Dendritic cell treated with granulocyte-macrophage colony-stimulating factor and Interleukin-4, amounts not matched to agents 40 ng/mL and 50 ng/mL, for 4 days (primary cell): ENCODE measurements at regions of chr5 and their contacts with region 1.

Region 1: DNA sequence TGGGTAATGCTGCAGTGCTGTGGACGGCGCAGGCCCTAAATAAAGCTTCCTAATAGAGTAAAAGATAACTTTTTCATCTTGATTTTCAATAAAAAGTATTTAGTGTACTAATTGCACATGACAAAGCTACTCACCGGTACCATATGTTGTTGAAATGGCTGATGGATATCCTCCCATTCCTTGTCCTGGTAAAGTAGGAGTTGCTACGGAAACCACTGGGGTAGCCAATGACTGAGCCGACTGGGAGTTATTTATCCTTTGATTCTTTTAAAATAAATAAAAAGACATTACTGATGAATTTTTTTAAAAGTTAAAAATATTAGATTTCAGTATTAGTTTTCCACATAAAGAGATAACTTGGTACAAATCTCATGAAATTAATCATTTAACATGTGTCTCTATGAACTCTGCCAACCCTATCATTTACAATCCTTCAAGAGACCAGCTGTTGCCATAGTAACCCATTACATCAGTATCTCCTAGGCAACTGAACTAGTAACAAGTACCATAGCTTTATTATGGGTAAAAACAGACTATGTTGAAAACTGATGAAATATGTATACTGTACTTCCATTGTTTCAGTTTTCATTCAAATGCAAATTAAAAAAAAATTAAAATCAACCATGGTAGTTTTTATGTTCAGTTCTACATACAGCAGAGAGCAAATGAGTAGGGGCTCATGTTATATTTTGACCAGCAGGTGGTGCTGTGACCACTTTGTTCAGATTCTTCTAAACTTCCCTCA is 153.7 kb downstream of the MEF2C start:
- H3K4me3 Mint-ChIP-seq: no peak overlapping the region
- H3K27ac Mint-ChIP-seq: no peak overlapping the region
- H3K4me1 Mint-ChIP-seq: peaks cover 28% of the 10 kb centered on the region
- H3K27me3 Mint-ChIP-seq: no peaks in the 10 kb centered on the region

Region 2: DNA sequence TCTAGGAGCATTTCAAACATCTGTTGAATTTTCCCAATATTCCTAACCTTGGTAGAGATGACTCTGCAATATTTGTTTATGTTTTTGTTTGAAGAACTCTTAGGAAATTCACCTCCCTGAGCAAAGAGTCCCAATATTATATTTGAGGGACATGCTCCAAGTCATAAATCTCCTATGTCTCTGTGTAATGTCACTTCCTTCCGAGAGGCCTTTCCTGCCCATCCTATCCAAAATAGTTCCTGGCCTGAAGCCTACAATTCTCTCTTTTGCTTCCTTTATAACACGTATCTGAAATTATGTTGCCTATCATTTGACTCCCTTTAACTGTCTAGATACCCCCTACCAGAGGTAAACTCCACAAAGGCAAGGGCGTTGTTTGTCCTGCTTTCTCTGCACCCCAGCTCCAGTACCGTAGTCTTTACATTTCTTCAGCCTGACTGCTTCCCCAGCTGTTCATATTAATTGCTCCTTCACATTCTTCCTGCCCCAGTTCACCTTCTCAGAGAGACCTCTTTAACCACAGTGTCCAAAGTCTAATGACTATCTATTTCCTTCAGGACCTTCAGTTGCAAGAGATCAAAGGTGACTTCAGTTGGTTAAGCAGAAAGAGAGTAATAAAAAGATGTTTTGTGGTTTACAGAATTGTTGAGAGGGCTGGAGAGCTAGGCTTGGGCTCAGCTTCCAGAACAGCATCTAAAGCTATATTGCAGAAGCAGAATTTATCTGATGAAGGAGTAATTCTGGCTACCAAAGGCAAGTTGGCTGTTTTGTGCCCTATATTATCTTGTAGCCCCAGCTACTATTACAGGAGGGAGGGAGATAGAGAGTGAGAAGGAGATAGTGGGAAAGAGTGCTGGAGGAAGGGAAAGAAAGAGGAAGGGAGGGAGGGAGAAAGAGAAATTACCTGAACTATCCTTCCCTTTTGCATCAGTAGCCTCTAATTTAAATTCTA is 351.3 kb before region 1 on chr5:
- intact Hi-C with region 1: no loop called
- H3K4me3 Mint-ChIP-seq: no peak overlapping the region
- H3K27ac Mint-ChIP-seq: no peak overlapping the region
- H3K4me1 Mint-ChIP-seq: no peaks in the 10 kb centered on the region
- H3K27me3 Mint-ChIP-seq: no peaks in the 10 kb centered on the region

Region 3: GRCh38 chr5:88524941-88525340 is 204.3 kb before region 1 on chr5:
- intact Hi-C with region 1: no loop called
- H3K4me3 Mint-ChIP-seq: no peak overlapping the region
- H3K27ac Mint-ChIP-seq: no peak overlapping the region
- H3K4me1 Mint-ChIP-seq: no peaks in the 10 kb centered on the region
- H3K27me3 Mint-ChIP-seq: no peaks in the 10 kb centered on the region

Region 4: GRCh38 chr5:88743231-88743879 is 14.1 kb after region 1 on chr5:
- intact Hi-C with region 1: no loop called
- H3K4me3 Mint-ChIP-seq: no peak overlapping the region
- H3K27ac Mint-ChIP-seq: no peak overlapping the region
- H3K4me1 Mint-ChIP-seq: no peaks in the 10 kb centered on the region
- H3K27me3 Mint-ChIP-seq: no peaks in the 10 kb centered on the region

Region 5: DNA sequence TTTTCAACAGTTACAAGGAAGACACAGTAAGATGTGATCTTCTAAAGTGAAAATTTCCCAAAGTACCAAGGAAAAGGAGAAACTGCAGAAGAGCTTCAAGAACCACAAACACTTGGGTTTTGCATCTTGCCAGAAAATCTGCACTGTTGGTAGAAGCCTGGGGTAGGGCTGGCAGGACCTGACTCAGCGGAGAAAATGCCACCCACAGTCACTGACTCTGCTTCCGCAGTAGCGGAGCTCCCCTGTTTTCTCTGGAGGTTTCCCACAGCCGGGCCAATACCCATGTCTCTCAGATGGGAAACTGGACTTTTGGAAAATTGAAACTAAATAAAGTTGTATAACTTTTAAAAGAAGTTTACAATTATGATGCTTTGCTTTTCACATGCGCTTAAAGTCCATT is 49.5 kb after region 1 on chr5:
- intact Hi-C with region 1: loop called (anchors 5 kb)
- H3K4me3 Mint-ChIP-seq: no peak overlapping the region
- H3K27ac Mint-ChIP-seq: peak overlapping the region; percentile 73
- H3K4me1 Mint-ChIP-seq: peaks cover 20% of the 10 kb centered on the region
- H3K27me3 Mint-ChIP-seq: no peaks in the 10 kb centered on the region

Region 6: DNA sequence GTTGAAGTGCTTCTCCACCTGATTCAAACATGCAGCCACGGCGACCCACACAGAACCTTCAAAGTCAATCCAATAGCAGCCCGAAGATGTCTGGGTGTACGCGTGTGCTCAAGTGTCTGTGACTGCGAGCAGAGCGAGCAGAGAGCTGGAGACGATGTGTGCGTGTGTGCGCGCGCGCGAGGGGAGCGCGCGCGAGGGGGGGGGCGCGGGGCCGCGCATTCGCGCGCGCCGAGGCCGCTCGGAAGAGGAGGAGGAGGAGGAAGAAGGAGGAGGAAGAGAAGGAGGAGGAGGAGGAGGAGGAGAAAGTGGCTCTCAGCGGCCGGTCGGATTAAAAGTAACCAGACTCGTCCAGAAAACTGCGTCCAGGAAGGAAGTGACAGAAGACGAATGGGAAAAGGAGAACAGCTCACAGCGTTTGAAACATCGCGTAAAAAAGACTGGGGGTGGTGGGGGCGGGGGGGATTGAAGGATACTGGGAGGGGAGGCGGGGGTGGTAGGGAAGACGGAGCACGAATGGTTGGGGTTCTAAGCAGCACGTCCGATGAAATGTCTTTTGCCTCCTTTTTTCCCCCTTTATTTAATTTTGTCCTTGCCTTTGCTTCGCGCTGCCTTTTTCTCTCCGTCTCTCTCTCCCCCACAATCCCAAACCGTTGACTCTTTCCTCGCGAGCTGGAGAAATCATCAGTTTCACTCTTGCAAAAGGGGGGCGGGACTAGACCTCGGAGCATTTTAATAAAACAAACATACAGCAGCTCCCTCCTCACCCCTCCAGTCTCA is 154.0 kb after region 1 on chr5 and contains the start of gene MEF2C:
- intact Hi-C with region 1: loop called (anchors 2 kb)
- H3K4me3 Mint-ChIP-seq: peak within 1 kb of the TSS; percentile 87
- H3K27ac Mint-ChIP-seq: peak within 1 kb of the TSS; percentile 87
- H3K4me1 Mint-ChIP-seq: peaks cover 2% of the 10 kb centered on the region
- H3K27me3 Mint-ChIP-seq: no peaks in the 10 kb centered on the region

Region 7: DNA sequence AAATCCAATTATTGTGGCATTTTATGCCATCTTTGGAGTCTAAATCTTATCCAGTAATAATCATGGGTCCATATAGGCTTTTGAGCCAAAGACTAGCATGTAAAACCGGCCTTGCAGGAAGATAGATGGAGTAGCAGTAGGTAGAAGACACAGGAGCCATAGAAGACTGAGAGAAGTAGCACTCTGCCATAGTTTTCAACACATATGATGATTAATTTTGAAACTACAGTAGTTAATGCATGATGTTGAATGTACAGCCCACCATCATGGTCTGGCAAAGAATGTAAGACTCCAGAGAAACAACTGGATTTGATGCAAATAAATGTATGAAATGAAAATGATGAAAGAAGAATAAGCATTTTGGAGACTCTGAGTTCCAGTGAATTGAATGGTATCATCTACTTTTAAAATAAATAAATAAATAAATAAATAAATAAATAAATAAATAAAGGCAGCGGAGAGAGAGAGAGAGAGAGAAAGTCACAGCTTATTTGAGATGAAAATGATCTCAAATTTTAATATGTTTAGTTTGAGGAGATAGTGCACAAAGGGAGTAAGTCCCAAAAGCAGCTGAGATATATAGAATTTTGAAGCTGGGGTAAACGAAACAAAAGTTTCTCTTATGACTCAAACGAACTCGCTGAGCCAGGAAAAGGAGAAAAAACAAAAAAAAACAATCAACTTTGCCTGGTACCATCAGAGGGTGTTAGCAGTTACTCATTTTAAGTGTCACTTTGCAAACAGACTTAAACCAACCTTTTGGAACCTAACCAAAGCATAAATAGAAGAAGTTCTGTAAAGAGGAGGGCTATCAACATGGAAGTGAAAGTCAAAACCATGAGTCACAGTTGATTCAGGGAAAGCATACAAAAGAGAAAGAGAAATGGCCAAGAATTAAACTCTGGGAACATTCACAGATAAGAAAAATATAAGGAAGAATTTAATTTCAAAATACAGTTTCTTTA is 1291.6 kb after region 1 on chr5:
- intact Hi-C with region 1: loop called (anchors 10 kb)
- H3K4me3 Mint-ChIP-seq: peak overlapping the region; percentile 5
- H3K27ac Mint-ChIP-seq: peak overlapping the region; percentile 79
- H3K4me1 Mint-ChIP-seq: peaks cover 23% of the 10 kb centered on the region
- H3K27me3 Mint-ChIP-seq: no peaks in the 10 kb centered on the region

Region 8: DNA sequence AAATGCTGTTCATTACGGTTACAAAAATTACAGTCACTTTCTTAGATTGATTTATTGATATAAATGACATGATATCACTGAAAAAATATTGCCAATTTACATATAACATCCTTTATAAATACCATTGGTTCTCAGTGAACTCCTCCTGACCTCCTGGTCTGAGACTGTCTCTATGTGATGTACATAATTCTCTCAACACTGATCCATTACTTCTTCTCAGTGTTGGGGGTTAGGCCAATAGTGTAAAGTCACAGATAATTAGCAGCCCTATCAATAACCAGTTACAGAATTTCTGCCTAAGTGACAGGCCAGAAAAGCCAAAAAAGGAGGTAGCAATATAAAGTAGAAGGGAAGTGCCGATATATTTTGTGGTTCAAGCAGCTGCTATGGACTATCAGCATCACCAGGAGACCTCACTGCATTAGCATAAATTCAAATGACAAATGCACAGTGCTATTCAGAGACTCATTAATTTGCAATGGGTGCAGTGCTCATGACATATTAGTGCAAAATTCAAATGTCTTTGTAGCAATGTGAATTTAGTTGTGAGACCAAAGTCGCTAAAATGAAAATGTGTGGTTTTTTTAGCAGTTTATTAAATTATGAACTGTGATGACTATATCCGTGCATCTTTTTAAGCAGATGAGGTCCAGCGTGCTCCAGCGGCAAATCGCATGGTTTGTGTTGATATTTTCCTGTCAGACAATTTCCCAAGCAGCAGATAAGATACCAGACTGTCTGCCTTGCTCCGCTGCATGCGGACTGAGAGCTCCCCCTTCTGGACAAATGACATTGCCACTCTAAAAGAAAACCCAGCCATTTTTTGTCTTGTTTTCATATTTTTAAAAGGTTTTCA is 1535.7 kb after region 1 on chr5:
- intact Hi-C with region 1: loop called (anchors 1 kb)
- H3K4me3 Mint-ChIP-seq: no peak overlapping the region
- H3K27ac Mint-ChIP-seq: no peak overlapping the region
- H3K4me1 Mint-ChIP-seq: no peaks in the 10 kb centered on the region
- H3K27me3 Mint-ChIP-seq: no peaks in the 10 kb centered on the region